Naive thymus-derived CD4-positive, alpha-beta T cell (primary cell): ENCODE measurements at regions of chr3 and their contacts with region 1.

Region 1: DNA sequence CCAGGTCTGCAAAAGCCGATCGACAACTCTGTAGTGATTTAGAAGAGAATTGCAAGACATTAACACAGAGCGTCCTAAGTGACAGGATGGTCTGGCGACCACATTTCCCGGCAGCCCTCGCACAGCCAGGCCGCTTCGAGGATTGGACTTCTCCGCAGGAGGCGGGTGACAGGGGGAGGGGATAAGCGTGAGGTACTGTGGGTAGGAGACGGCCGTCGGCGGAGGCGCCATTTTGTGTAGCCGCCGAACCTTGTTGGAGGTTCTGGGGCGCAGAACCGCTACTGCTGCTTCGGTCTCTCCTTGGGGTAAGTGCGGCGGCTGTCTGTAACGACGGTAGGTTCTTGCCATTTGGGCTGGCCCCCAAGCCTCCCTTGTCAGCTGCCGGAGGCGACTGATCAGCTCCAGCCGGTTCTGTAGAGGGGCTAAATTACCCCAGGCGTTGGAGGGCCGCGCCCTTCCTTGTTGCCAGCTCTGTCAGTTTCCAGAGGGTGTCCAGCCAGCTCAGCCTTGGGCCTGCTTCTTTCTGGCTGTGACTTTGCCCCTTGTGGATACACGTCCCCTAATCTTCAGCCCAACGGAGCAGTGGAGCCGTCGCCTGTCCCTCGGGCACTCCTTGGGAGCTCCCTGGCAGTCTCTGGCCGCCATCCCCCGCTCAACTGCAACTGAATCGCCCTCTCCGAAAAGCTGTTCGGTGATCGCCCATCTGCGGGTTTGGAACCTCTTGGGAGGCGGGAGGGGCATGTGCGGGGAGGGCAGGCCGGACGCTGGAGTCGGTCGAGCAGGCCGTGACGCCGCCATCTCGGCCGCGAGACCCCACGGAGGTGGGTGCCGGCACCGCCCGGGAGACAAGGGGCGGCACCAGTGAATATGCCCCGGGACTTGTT is at the start of gene RBM5:
- DNase-seq: peak; percentile 71 to 91 (median 89)
- ATAC-seq: peak; percentile 100
- H3K4me3 ChIP-seq: peak within 1 kb of the TSS; percentile 88
- H3K4me3 Mint-ChIP-seq: peak within 1 kb of the TSS; percentile 94 to 98 (median 96)
- H3K27ac ChIP-seq: peak within 1 kb of the TSS; percentile 98
- H3K27ac Mint-ChIP-seq: peak within 1 kb of the TSS; percentile 94 to 99 (median 97)
- H3K4me1 ChIP-seq: peaks cover 16 to 23% of the 10 kb centered on the region in 2 donors
- H3K4me1 Mint-ChIP-seq: peaks cover 24 to 36% (median 32%) of the 10 kb centered on the region in 7 donors
- H3K27me3 ChIP-seq: no peaks in the 10 kb centered on the region
- H3K27me3 Mint-ChIP-seq: no peaks in the 10 kb centered on the region
- total RNA-seq, gene RBM5: 223 to 420 (median 342) TPM

Region 2: GRCh38 chr3:49786241-49786958 is 302.6 kb before region 1 on chr3 and contains the start of gene IP6K1:
- CTCF ChIA-PET with region 1: no interaction called
- POLR2A ChIA-PET with region 1: no interaction called
- intact Hi-C with region 1: loop called in 1 of 2 experiments (anchors 2 kb)
- DNase-seq: peak; percentile 90 to 100 (median 99)
- ATAC-seq: peak; percentile 99
- H3K4me3 ChIP-seq: peak within 1 kb of the TSS; percentile 80
- H3K4me3 Mint-ChIP-seq: peak within 1 kb of the TSS; percentile 91 to 99 (median 94)
- H3K27ac ChIP-seq: peak within 1 kb of the TSS; percentile 95
- H3K27ac Mint-ChIP-seq: peak within 1 kb of the TSS; percentile 96 to 100 (median 99)
- H3K4me1 ChIP-seq: peaks cover 9 to 12% of the 10 kb centered on the region in 2 donors
- H3K4me1 Mint-ChIP-seq: peaks cover 15 to 50% (median 32%) of the 10 kb centered on the region in 7 donors
- H3K27me3 ChIP-seq: no peaks in the 10 kb centered on the region
- H3K27me3 Mint-ChIP-seq: peaks cover 0 to 6% (median 0%) of the 10 kb centered on the region in 5 donors
- total RNA-seq, gene IP6K1: 41.8 to 57.0 (median 47.3) TPM

Region 3: DNA sequence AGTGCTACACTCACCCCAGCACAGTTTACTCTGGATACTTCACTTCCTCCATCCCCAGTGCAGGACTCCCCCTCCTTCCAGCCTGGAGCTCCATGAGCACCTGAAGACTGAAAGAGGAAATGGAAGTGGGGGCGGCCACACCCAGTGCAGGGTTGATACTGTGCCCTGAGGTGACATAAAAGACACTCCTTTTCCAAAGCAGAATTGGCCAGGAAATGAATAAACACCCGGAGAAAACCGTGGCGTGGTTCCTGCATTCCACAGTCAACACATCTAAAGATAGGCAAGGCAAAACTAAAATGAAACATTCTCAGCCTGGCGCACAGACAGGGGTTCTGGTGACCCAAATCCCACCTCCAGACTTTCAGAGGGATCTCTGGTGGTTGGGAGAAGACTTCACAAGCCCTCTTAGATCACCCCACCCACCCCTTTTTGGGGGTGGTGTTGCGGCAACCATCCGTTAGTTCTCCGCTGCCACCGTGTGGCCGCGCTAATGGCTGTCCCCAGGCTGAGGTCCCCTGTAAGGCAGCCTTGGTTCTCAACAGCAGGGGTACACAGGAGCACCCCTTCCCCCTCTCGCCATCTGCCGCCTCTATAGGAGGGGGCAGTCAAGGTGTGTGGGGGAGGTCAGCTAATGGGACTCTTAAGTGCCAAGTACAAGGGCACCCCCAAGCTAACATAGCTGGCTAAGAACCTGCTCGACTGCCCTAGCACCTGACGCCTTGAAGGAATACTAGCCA is 182.8 kb before region 1 on chr3:
- CTCF ChIA-PET with region 1: no interaction called
- POLR2A ChIA-PET with region 1: no interaction called
- intact Hi-C with region 1: no loop called
- DNase-seq: peak; percentile 16 to 60 (median 39)
- ATAC-seq: peak; percentile 53
- H3K4me3 ChIP-seq: no peak overlapping the region
- H3K4me3 Mint-ChIP-seq: peak overlapping the region; percentile 39 to 79 (median 64)
- H3K27ac ChIP-seq: peak overlapping the region; percentile 24
- H3K27ac Mint-ChIP-seq: peak overlapping the region; percentile 63 to 91 (median 87)
- H3K4me1 ChIP-seq: peaks cover 15 to 26% of the 10 kb centered on the region in 2 donors
- H3K4me1 Mint-ChIP-seq: peaks cover 18 to 41% (median 27%) of the 10 kb centered on the region in 7 donors
- H3K27me3 ChIP-seq: no peaks in the 10 kb centered on the region
- H3K27me3 Mint-ChIP-seq: no peaks in the 10 kb centered on the region

Region 4: DNA sequence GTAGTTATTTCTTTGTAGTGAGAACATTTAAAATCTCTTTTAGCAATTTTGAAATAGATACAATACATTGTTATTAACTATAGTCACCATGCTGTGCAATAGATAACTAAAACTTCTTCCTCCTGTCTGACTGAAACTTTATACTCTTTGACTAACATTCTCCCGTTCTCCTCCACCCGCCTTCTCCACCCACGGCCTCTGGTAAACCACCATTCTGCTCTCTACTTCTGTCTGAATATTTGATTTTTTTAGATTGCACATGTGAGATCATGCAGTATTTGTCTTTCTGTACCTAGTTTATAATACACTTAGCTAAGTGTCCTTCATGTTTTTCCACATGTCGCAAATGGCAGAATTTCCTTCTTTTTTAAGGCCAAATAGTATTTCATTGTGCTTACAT is 73.0 kb before region 1 on chr3:
- CTCF ChIA-PET with region 1: no interaction called
- POLR2A ChIA-PET with region 1: no interaction called
- intact Hi-C with region 1: no loop called
- DNase-seq: no peak
- ATAC-seq: no peak
- H3K4me3 ChIP-seq: no peak overlapping the region
- H3K4me3 Mint-ChIP-seq: no peak overlapping the region
- H3K27ac ChIP-seq: no peak overlapping the region
- H3K27ac Mint-ChIP-seq: no peak overlapping the region
- H3K4me1 ChIP-seq: no peaks in the 10 kb centered on the region
- H3K4me1 Mint-ChIP-seq: peaks cover 0 to 8% (median 6%) of the 10 kb centered on the region in 7 donors
- H3K27me3 ChIP-seq: no peaks in the 10 kb centered on the region
- H3K27me3 Mint-ChIP-seq: no peaks in the 10 kb centered on the region

Region 5: DNA sequence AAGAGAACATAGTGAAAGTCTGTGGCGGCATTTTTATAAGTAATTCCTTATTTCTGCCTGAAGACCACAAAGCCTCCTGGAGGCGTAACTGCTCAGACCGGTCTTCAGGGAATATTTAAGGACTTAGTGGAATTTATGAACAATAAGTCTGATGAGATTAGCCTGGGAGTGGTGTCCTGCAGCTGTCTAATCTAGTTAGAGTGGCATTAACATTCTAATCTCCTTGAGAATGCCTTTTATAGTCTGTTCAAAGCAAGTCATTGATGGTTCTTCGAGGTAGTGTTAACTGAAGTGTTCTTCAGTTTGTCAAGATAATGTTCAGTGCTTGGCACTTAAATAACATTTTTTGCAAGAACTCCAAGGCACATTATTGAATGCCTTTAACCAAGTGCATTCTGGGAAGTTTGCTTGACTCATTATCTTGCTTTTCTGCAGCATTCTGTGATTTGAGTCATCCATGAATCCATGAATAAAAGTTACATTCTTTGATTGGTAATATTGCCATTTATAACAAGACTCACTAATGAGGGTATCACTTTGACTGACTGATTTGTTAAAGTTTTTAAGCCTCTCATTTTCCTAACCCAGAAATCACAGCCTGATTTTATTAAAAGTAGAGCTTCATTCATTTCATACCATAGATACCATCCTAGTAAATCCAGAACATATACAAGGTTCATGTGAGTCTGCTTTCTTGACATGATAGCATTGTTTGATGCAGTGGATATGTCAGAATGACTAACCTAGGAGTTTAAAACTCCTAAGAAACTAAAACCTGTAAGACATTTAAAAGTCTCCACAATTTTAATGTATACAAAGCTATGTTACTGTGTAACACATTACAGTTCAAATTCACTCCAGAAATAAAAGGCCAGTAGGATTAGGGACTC is 12.2 kb after region 1 on chr3:
- CTCF ChIA-PET with region 1: no interaction called
- POLR2A ChIA-PET with region 1: interaction called, 17 read pairs
- intact Hi-C with region 1: no loop called
- DNase-seq: no peak
- ATAC-seq: no peak
- H3K4me3 ChIP-seq: no peak overlapping the region
- H3K4me3 Mint-ChIP-seq: no peak overlapping the region
- H3K27ac ChIP-seq: no peak overlapping the region
- H3K27ac Mint-ChIP-seq: peak overlapping the region in 1 of 9 donors; percentile 19
- H3K4me1 ChIP-seq: no peaks in the 10 kb centered on the region
- H3K4me1 Mint-ChIP-seq: peaks cover 1 to 13% (median 9%) of the 10 kb centered on the region in 7 donors
- H3K27me3 ChIP-seq: no peaks in the 10 kb centered on the region
- H3K27me3 Mint-ChIP-seq: no peaks in the 10 kb centered on the region

Region 6: GRCh38 chr3:50314342-50314741 is 225.4 kb after region 1 on chr3:
- CTCF ChIA-PET with region 1: no interaction called
- POLR2A ChIA-PET with region 1: no interaction called
- intact Hi-C with region 1: no loop called
- DNase-seq: no peak
- ATAC-seq: no peak
- H3K4me3 ChIP-seq: no peak overlapping the region
- H3K4me3 Mint-ChIP-seq: no peak overlapping the region
- H3K27ac ChIP-seq: no peak overlapping the region
- H3K27ac Mint-ChIP-seq: peak overlapping the region in 5 of 9 donors; percentile 13 to 67 (median 52)
- H3K4me1 ChIP-seq: peaks cover 8 to 15% of the 10 kb centered on the region in 2 donors
- H3K4me1 Mint-ChIP-seq: peaks cover 9 to 25% (median 19%) of the 10 kb centered on the region in 7 donors
- H3K27me3 ChIP-seq: no peaks in the 10 kb centered on the region
- H3K27me3 Mint-ChIP-seq: no peaks in the 10 kb centered on the region